H1 (cell line): ENCODE measurements at regions of chr18 and their contacts with region 1.

Region 1: GRCh38 chr18:6920099-6920899 is 190.8 kb downstream of the ARHGAP28 start:
- DNase-seq: peak in 1 of 2 experiments; percentile 87
- H3K4me3 ChIP-seq: no peak overlapping the region
- H3K27ac ChIP-seq: no peak overlapping the region
- H3K4me1 ChIP-seq: no peaks in the 10 kb centered on the region
- H3K27me3 ChIP-seq: no peaks in the 10 kb centered on the region
- CTCF ChIP-seq: peak; percentile 11 to 87 (median 84)
- EP300 ChIP-seq: no peak
- POLR2A ChIP-seq: no peak
- RAD21 ChIP-seq: peak; percentile 92 to 96

Region 2: DNA sequence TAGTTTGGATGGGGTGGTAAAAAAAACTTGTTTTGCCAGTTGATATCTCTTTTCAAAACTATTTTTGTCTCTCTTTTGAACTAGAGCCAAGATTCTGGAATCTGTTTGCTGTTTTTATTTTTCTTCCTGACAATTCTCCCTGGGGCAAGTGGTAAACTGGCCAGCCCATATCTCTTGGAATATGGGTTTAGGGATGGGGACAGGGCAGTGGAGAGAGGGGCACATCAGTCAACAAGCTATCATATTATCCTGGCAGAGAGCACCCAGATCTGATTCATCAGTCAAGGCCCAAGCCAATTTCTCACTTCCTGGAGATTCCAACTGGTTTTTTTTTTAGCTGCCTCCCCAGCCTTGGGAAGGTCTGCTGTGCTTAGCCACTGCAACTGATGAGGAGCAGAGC is 138.5 kb before region 1 on chr18:
- CTCF ChIA-PET with region 1: no interaction called
- POLR2A ChIA-PET with region 1: no interaction called
- DNase-seq: no peak
- H3K4me3 ChIP-seq: no peak overlapping the region
- H3K27ac ChIP-seq: no peak overlapping the region
- H3K4me1 ChIP-seq: peaks cover 5 to 12% (median 6%) of the 10 kb centered on the region in 4 experiments
- H3K27me3 ChIP-seq: no peaks in the 10 kb centered on the region
- CTCF ChIP-seq: no peak
- EP300 ChIP-seq: no peak
- POLR2A ChIP-seq: no peak
- RAD21 ChIP-seq: no peak

Region 3: GRCh38 chr18:6939972-6940371 is 19.7 kb after region 1 on chr18:
- CTCF ChIA-PET with region 1: interaction called, 10 read pairs
- POLR2A ChIA-PET with region 1: no interaction called
- DNase-seq: no peak
- H3K4me3 ChIP-seq: no peak overlapping the region
- H3K27ac ChIP-seq: no peak overlapping the region
- H3K4me1 ChIP-seq: no peaks in the 10 kb centered on the region
- H3K27me3 ChIP-seq: no peaks in the 10 kb centered on the region
- CTCF ChIP-seq: no peak
- EP300 ChIP-seq: no peak
- POLR2A ChIP-seq: no peak
- RAD21 ChIP-seq: no peak

Region 4: DNA sequence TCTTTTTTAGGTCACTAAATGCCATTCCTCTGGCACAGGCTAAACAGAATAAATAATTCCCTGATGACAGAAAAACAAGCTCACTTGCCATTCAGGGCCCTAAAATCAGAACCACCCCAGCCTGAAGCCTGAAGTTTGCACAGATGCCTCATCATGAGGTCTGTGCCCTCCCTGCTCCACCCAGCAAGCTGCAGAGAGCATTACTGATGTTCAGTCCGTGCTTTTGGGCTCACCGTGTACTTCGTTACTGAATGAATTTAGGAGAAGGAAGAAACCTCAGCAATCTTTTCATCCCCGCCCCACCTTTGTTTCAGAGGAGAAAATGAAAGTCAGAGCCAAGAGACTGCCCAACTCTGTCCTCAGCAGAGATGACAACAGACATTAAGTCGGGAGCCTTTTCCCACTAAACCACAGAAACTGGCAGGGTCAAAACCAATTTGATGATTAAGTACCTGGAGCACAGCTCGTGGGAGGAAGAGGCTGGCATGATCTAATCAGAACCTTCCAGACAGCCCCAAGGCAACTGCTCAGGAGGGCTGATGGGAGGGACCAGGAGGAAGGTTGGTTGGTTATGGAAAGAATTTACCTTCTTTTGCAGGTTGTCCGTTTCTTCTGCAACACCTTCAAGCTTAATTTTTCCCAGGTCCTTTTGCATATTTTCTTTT is 74.6 kb after region 1 on chr18:
- CTCF ChIA-PET with region 1: interaction called, 12 read pairs
- POLR2A ChIA-PET with region 1: no interaction called
- DNase-seq: no peak
- H3K4me3 ChIP-seq: no peak overlapping the region
- H3K27ac ChIP-seq: no peak overlapping the region
- H3K4me1 ChIP-seq: no peaks in the 10 kb centered on the region
- H3K27me3 ChIP-seq: no peaks in the 10 kb centered on the region
- CTCF ChIP-seq: no peak
- EP300 ChIP-seq: no peak
- POLR2A ChIP-seq: no peak
- RAD21 ChIP-seq: no peak

Region 5: DNA sequence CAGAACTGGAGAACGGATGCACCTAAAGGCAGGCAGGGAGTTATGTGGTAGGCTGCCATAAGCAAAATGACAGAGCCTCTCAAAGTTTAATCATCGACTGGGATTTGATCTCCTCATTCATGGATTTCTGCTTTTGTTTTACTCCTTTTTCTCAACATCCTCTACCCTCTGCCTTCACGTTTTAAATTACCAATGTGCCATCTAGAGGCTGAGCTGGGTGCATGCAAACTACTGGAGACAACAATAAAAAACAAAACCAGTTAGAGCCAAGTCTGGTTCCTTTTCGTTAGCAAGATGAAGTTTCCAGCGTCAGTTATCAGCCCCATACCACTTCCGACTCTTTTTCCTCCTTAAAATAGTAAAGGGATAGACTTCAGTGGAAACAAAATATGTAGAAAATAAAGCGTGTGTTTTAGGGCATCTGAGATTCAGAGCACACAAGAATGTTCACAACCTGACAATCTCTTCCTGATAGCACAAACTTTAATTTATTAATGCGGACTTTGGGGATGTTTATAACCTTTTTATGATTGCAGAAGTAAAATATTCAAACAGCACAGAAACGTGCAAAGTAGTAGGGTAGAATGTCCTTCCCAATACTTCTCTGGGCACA is 80.3 kb after region 1 on chr18:
- CTCF ChIA-PET with region 1: interaction called, 16 read pairs
- POLR2A ChIA-PET with region 1: no interaction called
- DNase-seq: no peak
- H3K4me3 ChIP-seq: no peak overlapping the region
- H3K27ac ChIP-seq: no peak overlapping the region
- H3K4me1 ChIP-seq: peaks cover 0 to 3% (median 0%) of the 10 kb centered on the region in 4 experiments; a peak in 4 of 7 replicates
- H3K27me3 ChIP-seq: no peaks in the 10 kb centered on the region
- CTCF ChIP-seq: peak in 2 of 3 experiments; percentile 48 to 64; a peak in 2 of 4 replicates
- EP300 ChIP-seq: no peak
- POLR2A ChIP-seq: no peak
- RAD21 ChIP-seq: peak; percentile 52 to 54

Region 6: DNA sequence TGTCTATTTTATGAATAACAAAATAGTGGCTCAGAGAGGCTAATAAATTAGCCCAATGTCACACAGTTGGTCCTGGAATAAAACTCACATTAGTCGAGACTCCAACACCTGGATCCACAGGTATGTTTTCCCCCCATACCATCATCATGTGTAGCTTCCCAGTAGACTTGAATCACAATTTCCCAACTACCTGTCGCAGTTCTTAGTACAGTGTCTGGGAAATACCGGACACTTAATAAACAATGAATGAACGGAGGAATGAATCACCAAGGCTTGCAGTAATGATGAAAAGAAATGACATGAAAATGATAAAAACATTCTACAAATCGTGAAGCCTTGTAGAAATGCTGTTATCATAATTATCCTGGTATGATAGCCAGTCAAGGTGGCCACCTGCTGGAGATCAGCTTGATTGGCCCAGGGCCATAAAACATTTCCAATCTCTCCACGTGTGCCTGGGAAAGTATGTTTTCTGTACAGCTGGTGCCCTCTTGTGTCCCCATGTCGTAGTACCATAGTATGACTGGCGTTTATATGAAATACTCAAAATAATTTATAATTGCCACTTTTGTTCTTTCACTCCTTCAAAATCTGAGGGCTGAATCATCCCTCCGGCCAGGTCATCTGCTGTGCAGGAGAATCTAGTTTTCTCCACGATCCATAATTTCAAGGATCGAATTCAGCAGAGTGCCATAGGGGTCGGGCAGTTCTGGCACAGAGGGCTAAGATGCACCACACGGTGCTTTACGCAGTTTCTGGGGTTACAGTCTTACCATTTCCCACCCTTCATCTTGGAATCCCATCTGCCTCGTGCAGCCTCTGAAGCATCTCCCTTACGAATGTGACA is 101.9 kb after region 1 on chr18:
- CTCF ChIA-PET with region 1: interaction called, 20 read pairs
- POLR2A ChIA-PET with region 1: no interaction called
- DNase-seq: no peak
- H3K4me3 ChIP-seq: no peak overlapping the region
- H3K27ac ChIP-seq: no peak overlapping the region
- H3K4me1 ChIP-seq: no peaks in the 10 kb centered on the region
- H3K27me3 ChIP-seq: no peaks in the 10 kb centered on the region
- CTCF ChIP-seq: peak in 2 of 3 experiments; percentile 32 to 37; a peak in 3 of 4 replicates
- EP300 ChIP-seq: no peak
- POLR2A ChIP-seq: no peak
- RAD21 ChIP-seq: peak; percentile 28 to 30; a peak in 3 of 4 replicates

Region 7: GRCh38 chr18:7028625-7029024 is 108.3 kb after region 1 on chr18:
- CTCF ChIA-PET with region 1: interaction called, 15 read pairs
- POLR2A ChIA-PET with region 1: no interaction called
- DNase-seq: no peak
- H3K4me3 ChIP-seq: no peak overlapping the region
- H3K27ac ChIP-seq: no peak overlapping the region
- H3K4me1 ChIP-seq: no peaks in the 10 kb centered on the region
- H3K27me3 ChIP-seq: no peaks in the 10 kb centered on the region
- CTCF ChIP-seq: no peak
- EP300 ChIP-seq: no peak
- POLR2A ChIP-seq: no peak
- RAD21 ChIP-seq: no peak

Region 8: DNA sequence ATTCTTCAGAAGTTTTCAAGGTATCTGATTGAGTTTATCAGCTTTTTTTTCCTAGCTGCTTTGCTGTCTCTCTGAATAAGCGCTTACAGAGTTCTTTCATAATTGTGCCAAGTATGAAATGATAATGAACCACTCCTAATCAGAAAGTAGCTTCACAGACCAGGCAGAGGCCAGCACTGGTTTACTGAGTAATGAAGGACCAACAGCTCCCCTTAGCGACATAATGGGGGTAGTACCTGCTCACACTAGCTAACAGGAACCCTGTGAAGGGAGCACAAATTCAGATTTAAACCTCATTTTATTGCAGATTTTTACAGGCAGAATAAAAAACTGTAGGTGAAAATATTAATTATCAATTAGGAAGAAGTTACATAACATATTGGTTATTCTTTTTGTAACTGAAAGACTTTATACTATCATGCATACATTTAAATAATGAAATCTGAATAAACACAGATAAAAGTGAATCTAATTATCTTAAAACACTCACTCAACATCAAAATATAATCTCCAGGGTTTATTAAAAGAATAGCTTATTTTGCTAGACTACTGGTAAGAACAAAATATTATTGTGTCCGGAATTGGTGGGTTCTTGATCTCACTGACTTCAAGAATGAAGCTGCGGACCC is 256.9 kb after region 1 on chr18:
- CTCF ChIA-PET with region 1: interaction called, 64 read pairs
- POLR2A ChIA-PET with region 1: no interaction called
- DNase-seq: no peak
- H3K4me3 ChIP-seq: no peak overlapping the region
- H3K27ac ChIP-seq: no peak overlapping the region
- H3K4me1 ChIP-seq: no peaks in the 10 kb centered on the region
- H3K27me3 ChIP-seq: no peaks in the 10 kb centered on the region
- CTCF ChIP-seq: peak; percentile 45 to 84 (median 81)
- EP300 ChIP-seq: no peak
- POLR2A ChIP-seq: no peak
- RAD21 ChIP-seq: peak; percentile 92 to 95